ENCODE measurements at regions of chr17 and their contacts with region 1.

Region 1: GRCh38 chr17:28228126-28228857 is 90.7 kb upstream of the TMEM97 start:
- DNase-seq: no peak
- ATAC-seq: peak; percentile 40; the same call in 2 of the 3 replicates
- H3K4me3 ChIP-seq: no peak overlapping the region
- H3K27ac ChIP-seq: no peak overlapping the region
- H3K4me1 ChIP-seq: no peaks in the 10 kb centered on the region
- H3K27me3 ChIP-seq: peaks cover 0 to 9% of the 10 kb centered on the region in 2 experiments; a peak in 1 of 4 replicates
- CTCF ChIP-seq: 0 out of 6 replicates have a peak, but pooled peaks of 1 of the 3 experiments have one; percentile 13
- EP300 ChIP-seq: no peak
- POLR2A ChIP-seq: no peak
- RAD21 ChIP-seq: no peak

Region 2: GRCh38 chr17:28252436-28252835 is 24.1 kb after region 1 on chr17:
- CTCF ChIA-PET with region 1: interaction called, 19 read pairs
- POLR2A ChIA-PET with region 1: no interaction called
- RAD21 ChIA-PET with region 1: no interaction called
- SMC1A ChIA-PET with region 1: interaction called, 7 read pairs
- in situ Hi-C with region 1: no loop called
- intact Hi-C with region 1: no loop called
- DNase-seq: no peak
- ATAC-seq: no peak
- H3K4me3 ChIP-seq: no peak overlapping the region
- H3K27ac ChIP-seq: no peak overlapping the region
- H3K4me1 ChIP-seq: no peaks in the 10 kb centered on the region
- H3K27me3 ChIP-seq: no peaks in the 10 kb centered on the region
- CTCF ChIP-seq: no peak
- EP300 ChIP-seq: no peak
- POLR2A ChIP-seq: no peak
- RAD21 ChIP-seq: no peak

Region 3: DNA sequence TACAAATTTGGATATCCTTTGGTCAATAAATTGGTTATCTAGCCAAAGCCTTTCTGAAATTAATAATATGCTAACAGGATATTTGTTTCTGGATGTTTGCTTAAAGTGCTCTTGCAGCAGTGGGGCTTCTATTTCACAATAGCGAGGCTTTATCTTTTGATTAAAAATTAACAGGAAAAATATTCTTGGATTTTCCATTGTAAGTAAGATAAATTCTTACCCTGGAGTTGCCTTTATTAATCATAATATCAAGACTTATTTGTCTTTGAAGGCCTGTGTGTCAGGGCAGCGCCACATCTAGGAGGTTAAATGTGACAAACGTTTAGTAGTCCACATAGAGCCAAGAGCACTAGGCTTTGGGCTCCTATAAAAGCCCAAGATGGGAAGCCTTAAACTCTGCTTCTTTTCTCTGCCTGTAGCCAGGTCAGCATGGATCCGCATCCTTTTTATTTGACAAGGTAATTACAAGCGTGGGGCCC is 96.0 kb after region 1 on chr17:
- CTCF ChIA-PET with region 1: interaction called, 3 read pairs
- POLR2A ChIA-PET with region 1: no interaction called
- RAD21 ChIA-PET with region 1: no interaction called
- SMC1A ChIA-PET with region 1: interaction called, 3 read pairs
- in situ Hi-C with region 1: no loop called
- intact Hi-C with region 1: loop called (anchors 5 kb)
- DNase-seq: no peak
- ATAC-seq: no peak
- H3K4me3 ChIP-seq: no peak overlapping the region
- H3K27ac ChIP-seq: no peak overlapping the region
- H3K4me1 ChIP-seq: peaks cover 6% of the 10 kb centered on the region; the same call in 1 of the 2 replicates
- H3K27me3 ChIP-seq: no peaks in the 10 kb centered on the region
- CTCF ChIP-seq: no peak
- EP300 ChIP-seq: no peak
- POLR2A ChIP-seq: no peak
- RAD21 ChIP-seq: no peak

Measured in GM12878 (cell line).